CD4-positive, alpha-beta memory T cell (primary cell): ENCODE measurements at regions of chr14 and their contacts with region 1.

Region 1: DNA sequence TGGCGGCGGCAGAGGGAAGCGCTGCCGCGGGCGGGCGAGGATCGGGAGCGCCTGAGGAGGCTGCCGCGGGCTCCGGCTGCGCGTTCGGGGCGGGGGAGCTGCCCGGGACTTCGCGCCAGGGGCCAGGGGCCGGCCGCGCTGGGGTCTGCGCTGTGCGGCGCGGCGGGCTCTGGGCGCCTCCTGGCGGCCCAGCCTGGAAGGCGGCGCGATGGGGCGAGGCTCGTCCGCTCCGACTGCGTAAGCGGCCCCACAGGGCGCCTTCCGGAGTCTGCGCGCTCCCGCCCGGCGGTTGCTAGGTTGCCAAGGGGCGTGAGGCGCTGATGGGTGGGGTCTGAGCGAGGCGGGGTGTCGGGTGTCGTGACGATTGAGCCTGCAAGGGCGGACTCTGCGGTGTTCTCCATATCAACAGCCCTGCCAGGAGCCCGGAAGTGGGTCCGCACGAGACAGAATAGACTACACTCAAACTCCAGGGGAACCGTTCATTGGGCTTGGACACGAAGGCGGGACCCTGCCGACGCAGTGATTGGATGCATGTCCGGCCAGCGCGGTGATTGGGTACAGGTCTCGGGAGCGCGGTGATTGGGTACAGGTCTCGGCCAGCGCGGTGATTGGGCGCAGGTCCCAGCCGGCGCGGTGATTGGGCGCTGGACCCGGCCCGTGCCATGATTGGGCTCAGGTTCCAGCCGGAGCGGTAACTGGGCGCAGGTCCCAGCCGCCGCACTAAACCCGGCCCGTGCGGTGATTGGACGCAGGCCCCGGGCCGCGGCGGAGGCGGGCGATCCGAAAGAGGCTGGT is at the start of gene TEDC1:
- DNase-seq: peak; percentile 99 to 100 (median 100)
- H3K4me3 ChIP-seq: peak within 1 kb of the TSS in 1 of 2 donors; percentile 79
- H3K4me3 Mint-ChIP-seq: peak within 1 kb of the TSS; percentile 85 to 94 (median 88)
- H3K27ac ChIP-seq: peak within 1 kb of the TSS; percentile 97
- H3K27ac Mint-ChIP-seq: peak within 1 kb of the TSS; percentile 91 to 99 (median 99)
- H3K4me1 ChIP-seq: peaks cover 33% of the 10 kb centered on the region
- H3K4me1 Mint-ChIP-seq: peaks cover 8 to 49% (median 19%) of the 10 kb centered on the region in 4 donors
- H3K27me3 ChIP-seq: no peaks in the 10 kb centered on the region
- H3K27me3 Mint-ChIP-seq: no peaks in the 10 kb centered on the region
- total RNA-seq, gene TEDC1: 25.4 to 30.2 TPM

Region 2: GRCh38 chr14:105086833-105087307 is 403.9 kb before region 1 on chr14:
- CTCF ChIA-PET with region 1: interaction called, 5 read pairs
- POLR2A ChIA-PET with region 1: interaction called, 6 read pairs
- intact Hi-C with region 1: loop called (anchors 2 kb)
- DNase-seq: peak; percentile 81 to 87 (median 84)
- H3K4me3 ChIP-seq: peak overlapping the region; percentile 23 to 57
- H3K4me3 Mint-ChIP-seq: peak overlapping the region; percentile 71 to 83 (median 78)
- H3K27ac ChIP-seq: peak overlapping the region; percentile 26
- H3K27ac Mint-ChIP-seq: peak overlapping the region in 3 of 7 donors; percentile 15 to 91 (median 77)
- H3K4me1 ChIP-seq: peaks cover 23% of the 10 kb centered on the region
- H3K4me1 Mint-ChIP-seq: peaks cover 13 to 24% (median 16%) of the 10 kb centered on the region in 4 donors
- H3K27me3 ChIP-seq: no peaks in the 10 kb centered on the region
- H3K27me3 Mint-ChIP-seq: peaks cover 0 to 1% of the 10 kb centered on the region in 2 donors

Region 3: DNA sequence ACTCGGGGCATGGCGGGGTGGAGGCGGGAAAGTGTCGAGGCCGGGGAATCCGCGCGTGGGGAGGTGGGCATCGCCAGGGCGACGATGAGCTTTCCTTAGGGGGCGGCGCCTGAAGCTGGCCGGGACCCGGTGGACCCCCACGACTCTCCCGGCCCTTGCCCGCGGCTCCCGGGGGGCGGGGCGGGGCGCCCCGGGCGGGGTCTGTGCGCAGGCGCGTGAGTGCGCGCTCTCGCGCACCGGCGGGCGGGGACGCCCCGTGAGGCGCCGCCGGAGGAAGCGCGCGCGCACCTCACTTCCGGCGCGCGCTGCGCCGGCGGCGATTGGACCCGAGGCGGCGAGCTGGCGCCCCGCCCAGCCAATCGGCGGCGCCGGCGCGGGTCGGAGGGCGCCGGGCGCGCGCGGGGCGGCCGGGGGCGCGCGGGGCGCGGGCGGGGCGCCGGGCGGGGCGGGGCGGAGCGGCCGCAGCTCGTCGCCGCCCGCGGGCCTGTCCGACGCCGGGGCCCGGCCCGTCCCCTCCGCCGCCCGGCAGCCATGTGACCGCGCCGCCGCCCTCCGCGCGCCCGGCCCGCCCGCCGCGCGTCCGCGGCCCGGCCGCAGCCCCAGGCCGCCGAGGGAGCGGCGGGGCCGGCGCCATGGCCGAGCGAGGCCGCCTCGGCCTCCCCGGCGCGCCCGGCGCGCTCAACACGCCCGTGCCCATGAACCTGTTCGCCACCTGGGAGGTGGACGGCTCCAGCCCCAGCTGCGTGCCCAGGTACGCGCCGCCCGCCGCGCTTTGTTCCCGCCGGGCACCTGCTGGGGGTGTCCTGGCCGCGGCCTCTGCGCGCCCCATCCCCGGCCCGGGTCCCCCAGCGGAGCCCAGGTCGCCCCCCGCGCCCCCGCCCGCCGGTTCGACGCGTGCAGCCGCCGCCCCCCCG is 176.2 kb before region 1 on chr14 and contains the start of gene PACS2:
- CTCF ChIA-PET with region 1: no interaction called
- POLR2A ChIA-PET with region 1: interaction called, 14 read pairs
- intact Hi-C with region 1: loop called (anchors 1 kb)
- DNase-seq: peak; percentile 61 to 87 (median 83)
- H3K4me3 ChIP-seq: peak within 1 kb of the TSS; percentile 49 to 52
- H3K4me3 Mint-ChIP-seq: peak within 1 kb of the TSS; percentile 84 to 93 (median 86)
- H3K27ac ChIP-seq: peak within 1 kb of the TSS; percentile 62
- H3K27ac Mint-ChIP-seq: peak within 1 kb of the TSS; percentile 86 to 94 (median 90)
- H3K4me1 ChIP-seq: peaks cover 22% of the 10 kb centered on the region
- H3K4me1 Mint-ChIP-seq: peaks cover 7 to 31% (median 22%) of the 10 kb centered on the region in 4 donors
- H3K27me3 ChIP-seq: no peaks in the 10 kb centered on the region
- H3K27me3 Mint-ChIP-seq: no peaks in the 10 kb centered on the region
- total RNA-seq, gene PACS2: 70.9 to 76.6 TPM

Region 4: DNA sequence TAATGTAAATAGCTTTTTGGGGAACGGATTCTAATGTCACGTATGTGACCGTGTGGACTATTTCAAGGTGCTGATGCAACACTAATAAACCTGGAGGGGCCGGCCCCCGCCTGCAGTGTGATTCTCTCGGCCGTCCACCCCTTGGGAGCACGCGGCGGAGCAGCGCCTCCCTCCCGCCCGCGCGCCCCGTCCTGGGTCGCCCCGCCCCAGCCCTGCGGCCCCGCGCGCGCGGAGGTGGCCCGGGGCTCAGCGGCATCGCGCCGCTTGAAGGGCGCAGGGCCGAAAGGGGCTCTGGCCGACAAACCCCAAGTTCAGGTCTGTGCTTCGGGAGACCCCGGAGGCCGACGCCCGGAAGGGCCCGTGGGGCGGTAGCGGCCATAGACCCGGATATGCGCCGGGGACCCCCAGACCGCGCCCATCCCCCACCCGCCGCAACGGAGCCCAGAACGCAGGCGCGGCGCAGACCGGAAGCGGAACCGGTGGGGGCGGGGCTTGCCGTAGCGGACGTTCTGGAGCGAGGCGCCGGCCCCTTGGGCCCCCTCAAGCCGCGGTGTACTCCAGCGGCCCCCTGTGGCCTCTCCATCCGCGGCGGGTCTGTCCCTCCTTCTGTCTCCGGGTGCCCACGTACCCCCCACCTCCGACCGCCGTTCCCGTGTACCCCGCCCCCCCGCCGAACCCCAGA is 92.6 kb before region 1 on chr14 and contains the start of gene TEX22:
- CTCF ChIA-PET with region 1: interaction called, 6 read pairs
- POLR2A ChIA-PET with region 1: interaction called, 28 read pairs
- intact Hi-C with region 1: loop called (anchors 1 kb)
- DNase-seq: peak; percentile 79 to 86 (median 79)
- H3K4me3 ChIP-seq: peak within 1 kb of the TSS; percentile 57 to 74
- H3K4me3 Mint-ChIP-seq: peak within 1 kb of the TSS; percentile 77 to 85 (median 82)
- H3K27ac ChIP-seq: peak within 1 kb of the TSS; percentile 80
- H3K27ac Mint-ChIP-seq: peak within 1 kb of the TSS; percentile 58 to 90 (median 82)
- H3K4me1 ChIP-seq: peaks cover 18% of the 10 kb centered on the region
- H3K4me1 Mint-ChIP-seq: peaks cover 4 to 18% (median 10%) of the 10 kb centered on the region in 4 donors
- H3K27me3 ChIP-seq: no peaks in the 10 kb centered on the region
- H3K27me3 Mint-ChIP-seq: no peaks in the 10 kb centered on the region
- total RNA-seq, gene TEX22: 4.7 to 7.5 TPM

Region 5: DNA sequence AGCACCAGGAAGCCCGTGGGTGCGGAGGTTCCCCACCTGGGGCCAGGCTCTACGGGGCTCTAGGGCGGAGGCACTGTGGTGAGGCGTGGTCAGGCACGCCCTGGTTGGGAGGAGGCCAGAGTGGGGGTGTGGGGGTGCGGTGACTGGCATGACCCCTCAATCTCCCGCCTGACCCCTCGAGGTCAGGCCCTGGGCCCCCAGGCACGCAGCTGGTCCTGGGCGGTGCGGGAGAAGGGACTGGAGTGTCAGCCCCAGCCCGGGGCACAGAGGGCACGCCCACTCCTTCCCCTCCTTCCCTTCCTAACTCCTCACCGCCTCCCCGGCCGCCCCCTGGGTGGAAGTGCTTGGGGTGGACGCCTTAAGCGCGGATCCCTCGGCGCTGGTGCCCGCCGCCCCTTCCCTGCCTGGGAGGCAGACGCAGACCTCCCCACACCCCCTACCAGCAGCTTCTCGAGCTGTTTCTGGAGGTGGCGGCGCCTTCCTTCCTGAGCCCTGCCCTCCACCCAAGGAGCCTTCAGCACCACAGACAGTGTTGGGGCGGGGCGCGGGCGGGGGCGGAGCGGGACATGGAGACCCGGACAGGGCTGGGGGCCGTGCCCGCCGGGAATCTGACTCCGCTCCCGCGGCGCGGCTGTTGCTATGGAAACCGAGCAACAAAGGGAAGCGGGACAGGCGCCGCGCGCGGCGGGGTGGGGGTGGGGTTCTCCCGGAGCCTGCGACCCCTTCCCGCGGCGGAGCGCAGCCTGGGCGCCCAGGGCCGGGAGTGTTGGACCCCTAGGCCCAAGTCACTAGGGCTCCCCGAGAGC is 16.9 kb before region 1 on chr14:
- CTCF ChIA-PET with region 1: interaction called, 24 read pairs
- POLR2A ChIA-PET with region 1: interaction called, 346 read pairs
- intact Hi-C with region 1: loop called (anchors 2 kb)
- DNase-seq: peak; percentile 68 to 92 (median 71)
- H3K4me3 ChIP-seq: peak overlapping the region; percentile 36 to 61
- H3K4me3 Mint-ChIP-seq: peak overlapping the region; percentile 69 to 86 (median 76)
- H3K27ac ChIP-seq: peak overlapping the region; percentile 66
- H3K27ac Mint-ChIP-seq: peak overlapping the region; percentile 41 to 86 (median 62)
- H3K4me1 ChIP-seq: peaks cover 38% of the 10 kb centered on the region
- H3K4me1 Mint-ChIP-seq: peaks cover 7 to 24% (median 12%) of the 10 kb centered on the region in 4 donors
- H3K27me3 ChIP-seq: no peaks in the 10 kb centered on the region
- H3K27me3 Mint-ChIP-seq: no peaks in the 10 kb centered on the region